ENCODE measurements at regions of chr12 and their contacts with region 1.

Region 1: GRCh38 chr12:19439059-19440018 is at the start of gene AEBP2:
- DNase-seq: peak; percentile 95 to 97 (median 95)
- ATAC-seq: peak; percentile 95 to 98 (median 97)
- H3K4me3 ChIP-seq: peak within 1 kb of the TSS; percentile 82 to 99 (median 94)
- H3K27ac ChIP-seq: peak within 1 kb of the TSS; percentile 75 to 97 (median 92)
- H3K4me1 ChIP-seq: peaks cover 0 to 34% (median 26%) of the 10 kb centered on the region in 12 donors
- H3K27me3 ChIP-seq: no peaks in the 10 kb centered on the region
- CTCF ChIP-seq: peak in 1 of 12 donors; percentile 10
- POLR2A ChIP-seq: peak in 1 of 2 donors; percentile 75
- total RNA-seq, gene AEBP2: 13.1 to 36.5 (median 24.7) TPM

Region 2: GRCh38 chr12:19411234-19412204 is 27.8 kb before region 1 on chr12:
- intact Hi-C with region 1: loop called in 1 of 10 experiments (anchors 2 kb)
- DNase-seq: no peak
- ATAC-seq: peak in 3 of 4 donors; percentile 24 to 77 (median 56)
- H3K4me3 ChIP-seq: no peak overlapping the region
- H3K27ac ChIP-seq: peak overlapping the region in 10 of 12 donors; percentile 11 to 67 (median 50)
- H3K4me1 ChIP-seq: peaks cover 0 to 43% (median 17%) of the 10 kb centered on the region in 12 donors
- H3K27me3 ChIP-seq: no peaks in the 10 kb centered on the region
- CTCF ChIP-seq: no peak
- POLR2A ChIP-seq: no peak

Region 3: DNA sequence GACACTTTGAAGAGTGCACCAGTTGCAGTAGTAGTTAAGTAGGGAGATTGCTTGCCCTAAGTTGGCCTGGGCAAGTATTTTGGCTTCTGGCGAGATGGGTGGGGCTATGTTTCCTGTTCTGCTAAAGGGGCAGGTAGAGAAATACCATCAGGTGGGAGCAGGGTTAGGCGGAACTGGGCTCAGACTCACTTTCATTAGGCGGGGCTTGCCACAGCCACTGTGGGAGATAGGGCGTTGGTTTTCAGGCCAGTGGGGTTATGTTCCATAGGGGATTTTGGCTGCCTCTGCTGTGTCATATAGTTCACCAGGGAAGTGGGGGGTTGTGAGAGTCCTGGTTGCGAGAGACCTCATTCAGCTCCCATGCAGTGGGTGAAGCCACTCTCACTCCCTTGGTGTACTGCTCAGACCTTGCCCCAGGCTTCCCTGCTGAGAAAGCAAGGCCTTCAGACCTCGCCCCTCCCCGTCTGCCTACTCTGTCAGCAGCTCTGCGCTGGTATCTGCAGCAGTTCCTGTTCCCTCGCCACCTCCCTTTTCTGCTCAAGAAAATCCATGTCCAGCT is 43.3 kb after region 1 on chr12:
- intact Hi-C with region 1: loop called in 1 of 10 experiments (anchors 1 kb)
- DNase-seq: peak in 1 of 5 donors; percentile 41
- ATAC-seq: peak; percentile 33 to 81 (median 54)
- H3K4me3 ChIP-seq: peak overlapping the region in 1 of 12 donors; percentile 6
- H3K27ac ChIP-seq: peak overlapping the region in 1 of 12 donors; percentile 54
- H3K4me1 ChIP-seq: peaks cover 0 to 33% (median 16%) of the 10 kb centered on the region in 12 donors
- H3K27me3 ChIP-seq: no peaks in the 10 kb centered on the region
- CTCF ChIP-seq: no peak
- POLR2A ChIP-seq: no peak

Measured in heart left ventricle (tissue), 16 donors.